Activated naive CD4-positive, alpha-beta T cell treated with anti-CD3 and anti-CD28 coated beads for 36 hours (primary cell): ENCODE measurements at regions of chr17 and their contacts with region 1.

Region 1: DNA sequence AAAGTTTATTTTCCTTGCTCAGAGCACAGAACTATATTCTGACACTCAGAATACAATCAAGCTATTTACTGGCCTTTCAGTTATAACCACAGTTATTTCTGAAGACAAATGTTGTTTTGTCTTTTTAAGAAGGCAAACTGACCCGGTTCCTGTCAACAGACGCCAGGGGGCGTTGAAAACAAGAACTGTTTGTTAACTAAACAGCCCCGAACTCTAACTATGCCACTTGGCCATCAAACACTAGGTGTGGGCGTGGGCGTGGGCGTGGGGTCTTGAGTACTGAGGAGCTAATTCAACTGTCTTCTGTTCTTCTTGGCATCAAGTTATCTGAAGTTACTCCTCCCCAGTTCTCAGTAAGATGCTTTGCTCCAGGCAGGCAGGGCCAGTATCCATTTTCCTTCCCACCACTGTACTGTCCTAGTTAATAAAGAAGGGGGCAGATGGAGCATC is 63.2 kb upstream of the MTMR4 start:
- DNase-seq: peak; percentile 62
- H3K4me3 Mint-ChIP-seq: no peak overlapping the region
- H3K27ac Mint-ChIP-seq: no peak overlapping the region
- H3K4me1 Mint-ChIP-seq: peaks cover 3% of the 10 kb centered on the region
- H3K27me3 Mint-ChIP-seq: no peaks in the 10 kb centered on the region

Region 2: GRCh38 chr17:58200017-58200633 is 377.5 kb before region 1 on chr17:
- CTCF ChIA-PET with region 1: no interaction called
- intact Hi-C with region 1: no loop called
- DNase-seq: peak; percentile 67
- H3K4me3 Mint-ChIP-seq: no peak overlapping the region
- H3K27ac Mint-ChIP-seq: no peak overlapping the region
- H3K4me1 Mint-ChIP-seq: no peaks in the 10 kb centered on the region
- H3K27me3 Mint-ChIP-seq: no peaks in the 10 kb centered on the region

Region 3: DNA sequence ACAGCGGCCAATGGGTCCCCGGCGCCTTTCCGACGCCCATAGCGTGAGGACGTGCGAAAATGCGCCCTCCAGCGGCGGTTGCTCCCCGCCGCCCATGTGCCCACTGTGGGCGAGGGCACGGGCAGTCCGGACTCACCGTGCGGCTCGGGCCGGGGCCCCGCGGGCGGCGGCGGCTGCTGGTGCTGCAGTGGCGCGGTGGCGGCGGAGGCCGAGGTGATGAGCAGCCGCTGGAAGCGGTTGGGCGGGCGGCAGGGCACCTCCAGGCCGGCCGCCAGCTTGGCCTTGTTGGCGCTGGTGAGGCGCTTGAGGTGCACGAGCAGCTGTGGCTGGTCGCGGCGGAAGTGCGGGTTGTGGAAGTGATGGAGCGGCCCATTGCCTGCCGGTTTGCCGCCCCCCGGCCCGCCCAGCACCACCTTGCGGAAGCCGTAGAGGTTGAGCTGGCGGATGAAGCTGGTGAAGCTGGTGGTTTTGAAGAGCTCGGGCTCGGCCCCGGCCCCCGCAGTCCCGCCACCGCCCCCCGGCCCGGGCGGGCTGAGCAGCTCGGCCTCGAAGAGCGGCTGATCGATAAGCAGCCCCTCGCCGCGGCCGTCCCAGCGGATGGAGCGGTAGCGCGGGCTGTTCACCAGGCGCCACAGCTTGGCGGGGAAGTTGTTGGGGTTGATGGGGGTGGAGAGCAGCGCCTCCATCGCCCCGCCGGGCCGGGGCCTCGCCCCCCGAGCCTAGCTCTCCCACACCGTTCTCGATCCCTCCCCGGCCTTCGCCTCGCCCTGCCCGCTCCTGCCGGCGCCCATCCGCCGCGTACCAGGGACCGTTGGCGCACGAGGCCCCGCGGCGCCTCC is 89.9 kb before region 1 on chr17 and contains the start of gene HSF5:
- CTCF ChIA-PET with region 1: no interaction called
- intact Hi-C with region 1: no loop called
- DNase-seq: peak; percentile 79
- H3K4me3 Mint-ChIP-seq: peak within 1 kb of the TSS; percentile 58
- H3K27ac Mint-ChIP-seq: no peak within 1 kb of the TSS
- H3K4me1 Mint-ChIP-seq: peaks cover 15% of the 10 kb centered on the region
- H3K27me3 Mint-ChIP-seq: no peaks in the 10 kb centered on the region
- total RNA-seq, gene HSF5: 3.6 to 4.1 TPM

Region 4: DNA sequence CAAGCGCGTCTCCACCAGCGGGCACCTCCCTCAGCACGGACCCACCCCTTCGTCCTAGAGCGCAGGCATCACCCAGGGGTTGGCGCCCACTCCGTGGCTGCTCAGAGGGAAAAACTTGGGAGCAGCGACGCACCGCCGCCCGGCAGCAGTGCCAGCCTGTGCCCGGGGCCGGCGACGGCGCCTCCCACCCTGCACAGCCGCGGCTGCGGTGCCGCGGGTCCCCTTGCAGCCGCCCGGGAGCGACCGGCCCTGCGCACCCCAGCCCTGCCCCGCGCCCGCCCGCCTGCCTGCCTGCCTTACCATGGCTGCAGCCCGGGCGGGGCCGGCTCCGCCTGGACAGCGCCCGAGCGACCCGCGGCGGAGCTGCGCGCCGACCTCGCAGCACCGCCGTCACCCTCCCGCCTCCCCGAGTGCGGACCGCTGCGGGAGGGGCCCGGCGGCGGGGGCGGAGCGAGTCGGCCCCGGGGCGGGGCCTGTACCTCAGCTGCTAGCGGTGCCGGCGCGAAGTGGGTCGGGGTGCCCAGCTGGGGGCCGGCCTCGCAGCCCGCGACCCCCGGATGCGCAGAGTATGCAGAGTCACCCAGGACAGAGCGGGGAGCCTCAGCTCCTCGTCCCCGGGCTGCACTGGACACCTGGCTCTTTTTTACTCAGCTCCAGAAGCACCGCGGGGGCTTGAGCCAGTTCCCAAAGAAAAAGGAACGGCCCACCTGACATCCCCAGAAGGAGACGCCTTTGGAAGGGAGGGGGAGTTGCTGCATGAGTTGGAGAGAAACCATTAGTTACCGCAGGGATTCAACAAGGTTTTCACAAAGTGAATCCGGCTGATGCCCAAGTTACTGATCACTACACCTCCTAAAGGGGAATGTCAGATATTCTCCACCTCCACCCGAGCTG is 45.8 kb before region 1 on chr17:
- CTCF ChIA-PET with region 1: no interaction called
- intact Hi-C with region 1: no loop called
- DNase-seq: peak; percentile 48
- H3K4me3 Mint-ChIP-seq: peak overlapping the region; percentile 30
- H3K27ac Mint-ChIP-seq: no peak overlapping the region
- H3K4me1 Mint-ChIP-seq: peaks cover 2% of the 10 kb centered on the region
- H3K27me3 Mint-ChIP-seq: peaks cover 14% of the 10 kb centered on the region

Region 5: GRCh38 chr17:58556833-58557250 is 20.8 kb before region 1 on chr17:
- CTCF ChIA-PET with region 1: interaction called, 11 read pairs
- intact Hi-C with region 1: no loop called
- DNase-seq: no peak
- H3K4me3 Mint-ChIP-seq: no peak overlapping the region
- H3K27ac Mint-ChIP-seq: no peak overlapping the region
- H3K4me1 Mint-ChIP-seq: peaks cover 6% of the 10 kb centered on the region
- H3K27me3 Mint-ChIP-seq: no peaks in the 10 kb centered on the region

Region 6: GRCh38 chr17:58587702-58588254 is 10.1 kb after region 1 on chr17:
- CTCF ChIA-PET with region 1: interaction called, 15 read pairs
- intact Hi-C with region 1: no loop called
- DNase-seq: peak; percentile 76
- H3K4me3 Mint-ChIP-seq: no peak overlapping the region
- H3K27ac Mint-ChIP-seq: no peak overlapping the region
- H3K4me1 Mint-ChIP-seq: peaks cover 2% of the 10 kb centered on the region
- H3K27me3 Mint-ChIP-seq: no peaks in the 10 kb centered on the region

Region 7: GRCh38 chr17:59165902-59166342 is 588.3 kb after region 1 on chr17:
- CTCF ChIA-PET with region 1: no interaction called
- intact Hi-C with region 1: no loop called
- DNase-seq: peak; percentile 44
- H3K4me3 Mint-ChIP-seq: no peak overlapping the region
- H3K27ac Mint-ChIP-seq: no peak overlapping the region
- H3K4me1 Mint-ChIP-seq: peaks cover 3% of the 10 kb centered on the region
- H3K27me3 Mint-ChIP-seq: no peaks in the 10 kb centered on the region